ENCODE measurements at regions of chr17 and their contacts with region 1.

Region 1: DNA sequence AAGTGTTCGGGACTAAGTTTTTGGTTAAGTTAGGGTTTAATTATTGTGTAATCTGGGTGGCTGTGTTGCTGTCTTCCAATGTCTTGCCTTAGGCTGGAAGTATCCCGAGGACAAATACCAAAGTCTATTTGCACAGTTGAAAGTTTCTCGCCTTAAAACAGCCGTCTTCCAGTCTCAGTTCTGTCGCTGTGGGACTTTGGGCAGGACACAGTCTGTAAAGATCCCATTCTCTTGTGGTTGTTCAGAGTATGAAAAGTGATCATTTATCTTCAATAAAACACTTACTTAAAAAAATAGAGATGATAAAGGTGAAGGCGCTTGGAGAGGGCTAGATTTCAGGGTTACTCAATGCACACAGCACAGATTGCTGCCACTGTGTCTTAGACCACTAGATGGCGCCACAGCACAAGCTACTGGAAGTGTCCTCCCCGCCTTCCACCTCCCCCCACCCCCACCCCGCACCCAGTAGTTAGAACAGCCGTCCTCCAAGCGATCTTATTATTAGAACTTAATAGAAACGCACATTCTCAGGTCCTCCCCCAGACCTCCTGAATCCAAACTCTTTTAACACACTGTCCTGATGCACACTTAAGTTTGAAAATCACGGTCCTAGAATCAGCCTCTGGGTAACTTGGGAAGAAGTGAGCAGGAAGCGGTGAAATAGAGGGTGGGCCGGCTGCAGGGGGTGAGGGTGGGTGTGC is 45.9 kb downstream of the AKAP1 start:
- DNase-seq: peak; percentile 85
- ATAC-seq: peak; percentile 86

Region 2: GRCh38 chr17:57045868-57046704 is 84.8 kb before region 1 on chr17:
- intact Hi-C with region 1: no loop called
- DNase-seq: peak; percentile 64
- ATAC-seq: peak; percentile 44

Region 3: DNA sequence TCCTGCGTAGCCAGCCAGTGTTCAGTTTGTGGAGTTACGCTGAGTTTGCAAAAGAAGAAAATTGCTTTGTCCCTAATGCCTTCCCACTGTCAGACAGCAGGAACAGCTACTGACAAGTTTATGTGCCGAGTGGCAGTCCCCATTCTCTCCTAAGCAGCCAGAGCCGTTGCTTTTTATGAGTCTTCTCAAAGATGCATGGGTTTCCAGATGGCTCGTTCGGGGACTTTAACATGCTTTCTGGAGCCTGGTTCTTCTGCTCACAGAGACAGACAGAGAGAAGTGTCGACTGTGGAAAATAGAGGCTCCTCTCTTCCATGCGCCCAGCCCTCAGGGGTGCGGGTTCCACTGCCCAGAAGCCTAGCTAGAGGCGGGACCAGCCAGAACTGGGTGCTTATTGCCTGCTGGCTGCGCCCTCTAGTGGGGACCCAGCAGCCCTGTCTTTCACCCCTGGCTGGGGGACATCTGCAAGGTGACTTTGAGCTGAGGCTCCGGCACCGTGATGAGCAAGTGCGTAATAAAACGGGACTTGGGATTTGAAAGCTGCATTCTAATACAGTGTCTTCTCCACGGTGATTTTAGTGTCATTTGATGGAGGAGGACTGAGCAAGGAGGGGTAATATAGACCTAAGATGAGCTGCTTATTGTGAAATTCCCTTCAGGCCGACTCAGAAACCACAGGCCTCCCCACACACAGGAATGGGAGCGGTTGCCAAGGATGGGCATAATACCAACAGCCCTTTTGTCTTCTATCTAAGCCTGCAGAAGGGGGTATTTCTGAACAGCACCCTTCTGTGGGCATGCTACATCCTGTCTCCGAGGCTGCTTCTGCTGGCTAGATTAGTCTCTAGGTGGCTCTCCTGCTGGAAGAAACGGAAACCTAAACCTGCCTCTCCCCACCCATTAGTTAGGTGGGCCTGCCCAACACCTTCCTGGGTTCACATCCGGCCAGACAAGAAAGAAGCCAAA is 541.0 kb after region 1 on chr17:
- intact Hi-C with region 1: loop called (anchors 5 kb)
- DNase-seq: peak; percentile 88
- ATAC-seq: peak; percentile 94

Region 4: GRCh38 chr17:57747221-57748017 is 616.5 kb after region 1 on chr17:
- intact Hi-C with region 1: loop called (anchors 2 kb)
- DNase-seq: no peak
- ATAC-seq: no peak